PC-9 (cell line): ENCODE measurements at regions of chr12 and their contacts with region 1.

Region 1: GRCh38 chr12:104201238-104202001 is 14.2 kb upstream of the TXNRD1 start:
- DNase-seq: peak; percentile 40 to 49
- H3K4me3 ChIP-seq: no peak overlapping the region
- H3K27ac ChIP-seq: no peak overlapping the region
- H3K4me1 ChIP-seq: peaks cover 9% of the 10 kb centered on the region; the same call in 1 of the 2 replicates
- H3K27me3 ChIP-seq: no peaks in the 10 kb centered on the region
- CTCF ChIP-seq: peak; percentile 92

Region 2: DNA sequence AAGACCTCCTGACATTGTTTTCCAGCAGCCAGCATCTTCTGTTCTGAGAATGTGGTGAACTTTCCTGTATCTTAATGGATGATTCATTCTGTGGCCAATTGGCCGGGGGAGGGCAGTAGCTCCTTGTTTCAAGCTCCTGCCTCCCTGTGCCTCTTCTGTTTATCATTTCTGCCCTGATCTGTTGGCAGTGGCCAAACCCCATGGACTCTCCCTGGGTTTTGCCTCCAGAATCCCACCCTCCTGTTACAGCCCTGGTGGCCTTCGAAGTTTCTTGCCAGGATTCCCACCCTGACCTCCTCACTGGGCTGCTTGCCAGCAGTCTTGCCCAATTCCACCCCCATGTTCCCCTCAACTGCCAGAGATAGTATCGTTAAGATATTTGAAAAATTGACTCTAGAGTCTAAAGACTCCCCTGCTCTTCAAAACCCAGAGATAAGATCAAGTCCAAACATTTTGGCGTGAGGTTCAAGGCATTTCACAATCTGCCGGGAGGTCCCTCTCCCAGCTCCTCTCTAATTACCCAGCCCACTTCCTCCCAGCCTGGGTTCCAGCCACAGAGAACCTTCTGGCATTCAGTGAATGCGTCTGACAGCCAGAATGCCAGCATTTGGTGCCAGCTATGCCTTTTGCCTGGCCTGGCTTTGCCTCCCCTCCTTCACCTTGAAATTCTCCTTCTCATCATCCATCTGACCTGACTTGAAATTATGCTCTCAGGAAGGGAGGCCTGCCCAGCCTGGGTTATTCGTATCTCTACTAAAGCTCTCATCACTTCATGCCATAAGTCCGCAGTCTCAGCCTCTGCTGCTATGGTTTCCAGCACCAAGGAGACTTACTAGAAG is 23.5 kb before region 1 on chr12:
- CTCF ChIA-PET with region 1: interaction called, 12 read pairs
- POLR2A ChIA-PET with region 1: no interaction called
- intact Hi-C with region 1: no loop called
- DNase-seq: peak; percentile 73 to 88
- H3K4me3 ChIP-seq: peak overlapping the region; percentile 18; the same call in 1 of the 2 replicates
- H3K27ac ChIP-seq: peak overlapping the region; percentile 56
- H3K4me1 ChIP-seq: peaks cover 38% of the 10 kb centered on the region
- H3K27me3 ChIP-seq: no peaks in the 10 kb centered on the region
- CTCF ChIP-seq: peak; percentile 60; the same call in 1 of the 2 replicates

Region 3: DNA sequence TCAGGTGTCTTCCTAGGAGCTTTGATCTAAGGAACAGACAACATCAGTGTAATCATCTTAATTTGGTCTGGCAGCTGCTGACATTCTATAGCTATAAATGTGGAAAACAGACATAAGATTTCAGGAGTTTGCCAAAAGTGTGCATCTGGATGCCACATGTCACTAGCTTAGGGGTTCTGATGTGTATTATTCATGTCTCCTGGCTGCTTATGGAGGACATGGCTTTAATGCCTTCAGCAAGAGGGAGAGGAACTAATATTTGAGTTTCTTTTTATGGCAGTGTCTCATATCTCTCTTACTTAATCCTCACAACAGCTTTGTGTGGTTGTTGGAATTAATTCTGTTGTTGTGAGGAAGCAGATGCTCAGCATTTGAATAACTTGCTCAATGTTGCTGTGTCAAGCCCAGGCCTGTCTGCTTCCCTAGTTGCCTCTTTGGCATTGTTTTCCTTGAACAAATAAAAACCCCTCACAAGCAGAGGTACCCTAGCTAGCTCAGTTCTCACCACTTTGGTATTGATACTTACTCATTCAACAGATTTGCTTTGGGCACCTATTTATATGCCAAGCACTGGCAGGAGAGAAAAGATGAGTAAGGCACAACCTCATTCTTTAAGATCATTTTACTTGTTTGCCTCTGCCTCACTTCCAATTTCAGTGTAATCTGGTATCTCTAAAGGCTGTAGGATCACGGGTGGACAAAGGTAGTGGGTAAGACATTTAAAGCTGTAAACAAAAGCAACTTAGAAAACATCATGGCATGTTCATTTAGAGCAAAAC is 62.3 kb after region 1 on chr12:
- CTCF ChIA-PET with region 1: no interaction called
- POLR2A ChIA-PET with region 1: no interaction called
- intact Hi-C with region 1: no loop called
- DNase-seq: no peak
- H3K4me3 ChIP-seq: no peak overlapping the region
- H3K27ac ChIP-seq: peak overlapping the region; percentile 23
- H3K4me1 ChIP-seq: peaks cover 13% of the 10 kb centered on the region
- H3K27me3 ChIP-seq: no peaks in the 10 kb centered on the region
- CTCF ChIP-seq: no peak

Region 4: DNA sequence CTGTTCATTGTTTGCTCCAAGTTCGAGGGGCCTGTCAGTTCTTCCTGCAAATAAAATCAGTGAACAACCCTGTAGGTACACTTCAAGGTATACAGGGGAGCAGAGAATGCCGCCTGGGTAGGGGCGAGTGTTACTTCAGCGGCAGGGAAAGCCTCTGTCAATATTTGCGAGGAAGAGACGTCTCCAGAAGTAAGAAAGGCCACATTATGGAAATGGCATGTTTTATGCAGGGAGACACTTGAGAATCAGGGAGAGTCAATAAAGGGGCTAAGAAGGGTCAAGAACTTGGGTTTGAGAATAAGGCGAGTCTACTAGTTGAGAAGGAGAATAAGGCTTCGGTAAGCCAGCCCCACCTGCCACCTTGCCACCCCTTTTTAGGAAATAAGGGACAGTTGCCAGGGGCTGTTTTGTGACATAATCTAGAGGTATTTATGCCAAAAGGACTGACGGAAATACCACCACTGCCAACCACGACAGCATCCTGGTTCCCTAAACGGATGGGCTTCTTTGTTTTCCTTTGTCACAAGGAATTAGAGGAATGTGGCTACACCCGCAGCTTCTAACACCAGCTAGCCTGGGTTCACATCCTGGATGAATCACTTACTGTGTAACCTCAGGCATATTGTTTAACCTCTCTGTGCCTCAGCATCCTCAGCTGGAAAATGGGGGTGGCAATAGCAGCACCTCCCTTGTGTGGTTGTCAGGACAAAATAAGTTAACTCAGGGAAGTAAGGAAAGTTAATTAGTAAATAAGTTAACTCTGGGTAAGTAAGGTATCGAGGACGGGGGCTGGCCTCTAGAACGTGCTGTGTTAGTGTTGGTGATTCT is 169.8 kb after region 1 on chr12:
- CTCF ChIA-PET with region 1: no interaction called
- POLR2A ChIA-PET with region 1: no interaction called
- intact Hi-C with region 1: no loop called
- DNase-seq: peak; percentile 62 to 95
- H3K4me3 ChIP-seq: no peak overlapping the region
- H3K27ac ChIP-seq: peak overlapping the region; percentile 67
- H3K4me1 ChIP-seq: peaks cover 55% of the 10 kb centered on the region
- H3K27me3 ChIP-seq: no peaks in the 10 kb centered on the region
- CTCF ChIP-seq: no peak

Region 5: GRCh38 chr12:105053116-105053572 is 851.7 kb after region 1 on chr12:
- CTCF ChIA-PET with region 1: no interaction called
- POLR2A ChIA-PET with region 1: no interaction called
- intact Hi-C with region 1: loop called (anchors 1 kb)
- DNase-seq: peak; percentile 65 to 70
- H3K4me3 ChIP-seq: no peak overlapping the region
- H3K27ac ChIP-seq: no peak overlapping the region
- H3K4me1 ChIP-seq: no peaks in the 10 kb centered on the region
- H3K27me3 ChIP-seq: no peaks in the 10 kb centered on the region
- CTCF ChIP-seq: peak; percentile 92

Region 6: DNA sequence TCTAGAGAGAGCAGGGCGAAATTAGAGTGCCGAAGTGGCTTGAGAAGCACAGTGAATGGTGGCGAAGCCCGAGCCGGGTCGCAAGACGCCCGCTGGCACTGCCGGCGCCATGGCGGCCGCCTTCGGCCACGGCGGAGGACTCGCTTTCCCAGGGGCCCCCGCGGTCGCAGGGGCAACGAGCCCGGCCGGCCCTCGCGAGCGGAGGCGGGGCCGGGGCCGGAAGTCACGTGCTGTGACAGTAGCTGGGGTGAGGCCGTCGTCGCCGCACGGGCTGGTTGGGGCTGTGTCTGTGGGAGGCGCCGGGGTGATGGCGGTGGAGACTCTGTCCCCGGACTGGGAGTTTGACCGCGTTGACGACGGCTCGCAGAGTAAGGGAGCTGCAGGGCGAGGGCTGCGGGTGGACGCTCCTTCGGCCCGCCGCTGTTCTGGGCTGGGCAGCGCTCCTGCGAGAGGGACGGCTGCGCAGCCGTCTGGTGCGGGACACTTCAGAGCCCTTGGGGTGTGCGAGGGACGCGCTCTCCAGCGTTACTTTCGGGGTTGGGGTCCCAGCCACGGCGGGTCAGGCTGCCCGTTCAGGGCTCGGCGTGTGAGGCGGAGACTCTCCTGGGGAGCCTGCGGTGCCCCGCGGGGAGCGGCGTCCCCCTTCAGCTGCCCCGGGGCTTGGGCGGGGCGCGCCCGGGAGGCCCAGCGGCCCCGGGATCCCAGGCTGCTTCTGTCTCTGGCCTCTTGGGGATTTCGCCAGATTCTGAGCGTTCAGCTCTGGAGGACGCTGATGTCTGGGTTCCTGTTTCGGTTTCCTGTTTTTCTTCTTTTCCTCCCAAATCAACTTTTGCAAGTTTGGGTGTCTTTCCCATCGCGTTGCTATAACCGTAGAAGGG is 906.3 kb after region 1 on chr12 and contains the start of gene WASHC4:
- CTCF ChIA-PET with region 1: no interaction called
- POLR2A ChIA-PET with region 1: no interaction called
- intact Hi-C with region 1: loop called (anchors 10 kb)
- DNase-seq: peak; percentile 78 to 91
- H3K4me3 ChIP-seq: peak within 1 kb of the TSS; percentile 82
- H3K27ac ChIP-seq: peak within 1 kb of the TSS; percentile 55
- H3K4me1 ChIP-seq: peaks cover 35% of the 10 kb centered on the region
- H3K27me3 ChIP-seq: no peaks in the 10 kb centered on the region
- CTCF ChIP-seq: no peak
- total RNA-seq, gene WASHC4: 25.5 and 28.7 TPM in 2 replicates

Region 7: DNA sequence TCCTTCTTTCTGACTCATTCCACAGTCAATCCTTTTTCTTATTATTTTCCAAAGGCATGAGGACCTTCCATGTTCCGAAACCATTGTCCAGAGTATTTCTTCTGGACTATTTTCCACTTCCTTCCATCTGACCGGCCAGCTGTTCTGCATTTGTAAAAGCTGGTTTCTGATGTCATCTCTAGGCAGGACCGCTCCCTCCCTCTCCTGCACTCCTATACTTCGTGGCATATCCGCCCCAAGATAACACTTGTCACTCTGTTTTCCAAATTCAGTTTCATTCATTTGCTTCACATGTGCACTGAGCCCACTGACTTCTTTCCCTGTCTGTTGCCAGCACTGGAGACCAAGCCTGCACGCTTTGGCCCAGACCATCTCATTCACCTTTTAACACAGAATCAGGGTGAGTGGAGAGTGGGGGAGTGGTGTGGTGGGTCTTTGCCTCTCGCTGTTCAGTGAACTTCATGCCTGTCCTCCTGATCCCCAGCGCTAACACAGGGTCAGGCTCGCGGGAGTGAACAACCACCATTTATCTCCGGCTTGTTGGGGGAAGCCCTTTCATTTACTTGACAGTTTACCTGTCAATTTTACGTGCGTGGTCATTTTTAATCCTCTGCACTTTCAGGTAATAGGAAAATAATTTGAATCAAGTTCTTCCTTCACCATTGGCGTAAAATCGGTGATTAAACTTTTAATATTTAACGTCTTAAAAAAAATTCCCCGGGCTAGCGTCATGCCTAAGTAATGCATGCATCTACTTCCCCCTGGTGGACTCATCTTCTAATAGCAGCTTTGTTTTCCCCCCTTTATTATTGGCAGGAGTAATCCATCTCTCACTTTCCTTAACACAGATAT is 1181.6 kb after region 1 on chr12:
- CTCF ChIA-PET with region 1: interaction called, 3 read pairs
- POLR2A ChIA-PET with region 1: no interaction called
- intact Hi-C with region 1: loop called (anchors 10 kb)
- DNase-seq: peak; percentile 7 to 59
- H3K4me3 ChIP-seq: no peak overlapping the region
- H3K27ac ChIP-seq: no peak overlapping the region
- H3K4me1 ChIP-seq: peaks cover 7% of the 10 kb centered on the region; the same call in 1 of the 2 replicates
- H3K27me3 ChIP-seq: 0 out of 2 replicates have a peak, but pooled peaks cover 11% of the 10 kb centered on the region
- CTCF ChIP-seq: peak; percentile 82